ENCODE measurements at regions of chr1 and their contacts with region 1.

Region 1: GRCh38 chr1:119275145-119276134 is 93.1 kb upstream of the HAO2 start:
- DNase-seq: peak; percentile 44
- H3K4me3 Mint-ChIP-seq: no peak overlapping the region
- H3K27ac Mint-ChIP-seq: no peak overlapping the region
- H3K4me1 Mint-ChIP-seq: peaks cover 12% of the 10 kb centered on the region
- H3K27me3 Mint-ChIP-seq: peaks cover 14% of the 10 kb centered on the region
- CTCF ChIP-seq: peak; percentile 61

Region 2: GRCh38 chr1:119140177-119141019 is 135.0 kb before region 1 on chr1 and contains the start of gene WARS2:
- CTCF ChIA-PET with region 1: no interaction called
- intact Hi-C with region 1: loop called (anchors 5 kb)
- DNase-seq: peak; percentile 86
- H3K4me3 Mint-ChIP-seq: no peak within 1 kb of the TSS
- H3K27ac Mint-ChIP-seq: no peak within 1 kb of the TSS
- H3K4me1 Mint-ChIP-seq: peaks cover 10% of the 10 kb centered on the region
- H3K27me3 Mint-ChIP-seq: no peaks in the 10 kb centered on the region
- CTCF ChIP-seq: no peak
- total RNA-seq, gene WARS2: 7.8 and 8.8 TPM in 2 replicates

Region 3: DNA sequence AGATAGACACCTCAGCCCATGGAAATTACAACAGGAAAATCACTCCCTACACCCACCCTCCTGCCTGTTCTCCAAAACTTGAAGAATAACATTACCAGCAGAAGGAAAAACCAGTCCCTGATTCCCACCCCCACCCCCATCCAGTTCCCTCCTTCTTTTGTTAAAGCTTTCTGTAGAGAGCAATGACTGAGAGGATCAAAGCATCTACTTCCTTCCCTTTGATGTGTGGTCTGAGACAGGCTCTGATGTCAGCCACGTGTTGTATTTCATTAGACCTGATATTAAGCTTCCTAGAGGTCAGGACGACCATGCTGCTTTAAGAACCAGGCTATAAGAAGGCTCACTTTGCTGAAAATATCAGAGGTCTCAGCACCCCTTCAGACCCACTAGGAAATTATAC is 19.3 kb after region 1 on chr1:
- CTCF ChIA-PET with region 1: no interaction called
- intact Hi-C with region 1: no loop called
- DNase-seq: no peak
- H3K4me3 Mint-ChIP-seq: no peak overlapping the region
- H3K27ac Mint-ChIP-seq: no peak overlapping the region
- H3K4me1 Mint-ChIP-seq: peaks cover 9% of the 10 kb centered on the region
- H3K27me3 Mint-ChIP-seq: peaks cover 41% of the 10 kb centered on the region
- CTCF ChIP-seq: no peak

Region 4: DNA sequence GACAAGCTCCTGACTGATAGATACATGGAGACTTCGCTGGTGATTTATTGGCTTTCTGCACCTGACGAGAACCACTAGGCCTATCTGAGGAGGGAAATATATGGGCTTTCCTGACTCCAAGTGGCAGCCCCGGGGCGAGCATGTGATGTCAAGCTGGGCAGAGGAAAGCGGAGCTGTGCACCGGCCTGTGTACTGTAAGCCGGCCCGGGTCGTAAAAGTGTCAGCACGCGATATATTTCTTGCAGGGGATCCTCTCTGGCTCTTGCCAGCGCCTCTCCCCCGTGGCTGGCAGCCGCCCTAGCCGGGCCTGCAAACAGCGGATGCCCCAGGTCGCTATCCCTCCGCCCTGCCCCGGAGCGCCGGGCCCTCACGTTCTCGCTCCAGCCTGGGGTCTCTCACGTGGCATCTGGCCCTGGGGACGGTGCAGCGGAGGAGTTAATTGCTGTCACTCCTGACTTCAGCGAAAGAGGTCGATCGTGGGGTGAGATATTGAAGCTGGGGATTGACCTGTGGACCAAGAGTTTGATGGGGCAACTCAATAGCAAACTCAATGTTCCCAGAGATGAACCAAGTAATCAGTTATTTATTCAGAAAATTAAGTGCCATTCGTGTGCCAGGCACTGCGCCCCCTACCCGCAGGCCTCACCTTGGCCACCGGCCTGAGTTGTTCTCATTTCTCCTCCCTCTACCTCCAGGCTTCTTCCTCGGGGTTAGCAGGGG is 52.2 kb after region 1 on chr1:
- CTCF ChIA-PET with region 1: no interaction called
- intact Hi-C with region 1: loop called (anchors 5 kb)
- DNase-seq: peak; percentile 54
- H3K4me3 Mint-ChIP-seq: peak overlapping the region; percentile 65
- H3K27ac Mint-ChIP-seq: no peak overlapping the region
- H3K4me1 Mint-ChIP-seq: no peaks in the 10 kb centered on the region
- H3K27me3 Mint-ChIP-seq: no peaks in the 10 kb centered on the region
- CTCF ChIP-seq: peak; percentile 37

Region 5: GRCh38 chr1:119367427-119368124 is 92.1 kb after region 1 on chr1:
- CTCF ChIA-PET with region 1: interaction called, 5 read pairs
- intact Hi-C with region 1: loop called (anchors 1 kb)
- DNase-seq: no peak
- H3K4me3 Mint-ChIP-seq: no peak overlapping the region
- H3K27ac Mint-ChIP-seq: no peak overlapping the region
- H3K4me1 Mint-ChIP-seq: no peaks in the 10 kb centered on the region
- H3K27me3 Mint-ChIP-seq: peaks cover 43% of the 10 kb centered on the region
- CTCF ChIP-seq: peak; percentile 63